ENCODE measurements at regions of chr17 and their contacts with region 1.

Region 1: GRCh38 chr17:19992803-19993713 is 15.4 kb upstream of the AKAP10 start:
- DNase-seq: no peak
- H3K4me3 ChIP-seq: no peak overlapping the region
- H3K27ac ChIP-seq: no peak overlapping the region
- H3K4me1 ChIP-seq: peaks cover 13% of the 10 kb centered on the region
- H3K27me3 ChIP-seq: no peaks in the 10 kb centered on the region
- CTCF ChIP-seq: peak; percentile 52 to 86 (median 74)
- POLR2A ChIP-seq: no peak

Region 2: DNA sequence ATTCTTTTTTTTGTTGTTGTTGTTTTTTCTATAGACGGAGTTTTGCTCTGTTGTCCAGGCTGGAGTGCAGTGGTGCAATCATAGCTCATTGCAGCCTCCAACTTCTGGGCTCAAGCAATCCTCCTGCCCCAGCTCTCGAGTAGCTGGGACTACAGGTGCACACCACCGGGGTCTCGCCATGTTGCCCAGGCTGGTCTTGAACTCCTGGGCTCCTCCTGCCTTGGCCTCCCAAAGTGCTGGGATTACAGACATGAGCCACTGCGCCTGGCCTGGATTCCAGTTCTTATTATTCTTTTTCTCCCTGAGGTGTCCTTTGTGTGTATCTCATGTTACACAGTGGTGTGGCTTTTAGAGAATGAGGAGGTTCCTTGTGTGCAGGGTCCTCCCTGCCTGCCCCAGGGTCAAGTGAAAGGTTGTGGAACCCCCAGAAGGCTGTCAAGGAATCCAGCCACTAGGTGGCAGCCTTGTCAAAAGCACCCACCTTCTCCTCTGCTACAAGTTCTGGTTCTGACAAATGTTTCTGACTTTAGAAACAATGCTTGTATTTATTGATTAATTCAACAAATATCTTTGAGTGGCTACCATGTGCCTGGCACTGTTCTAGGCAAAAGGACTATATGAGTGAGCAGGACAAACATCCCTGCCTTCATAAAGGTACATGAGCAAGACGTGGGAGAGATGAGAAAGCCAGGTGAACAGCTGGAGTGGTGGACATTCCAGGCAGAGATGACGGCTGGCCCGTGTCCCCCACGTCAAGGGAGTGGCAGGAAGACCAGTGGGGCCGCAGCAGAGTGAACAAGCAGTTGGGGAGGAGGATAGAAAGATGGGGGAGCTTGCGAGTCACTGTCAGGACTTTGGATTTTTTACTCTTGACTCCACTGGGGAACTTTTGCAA is 128.5 kb after region 1 on chr17:
- intact Hi-C with region 1: loop called (anchors 5 kb)
- DNase-seq: no peak
- H3K4me3 ChIP-seq: no peak overlapping the region
- H3K27ac ChIP-seq: no peak overlapping the region
- H3K4me1 ChIP-seq: no peaks in the 10 kb centered on the region
- H3K27me3 ChIP-seq: no peaks in the 10 kb centered on the region
- CTCF ChIP-seq: peak; percentile 41 to 76 (median 61)
- POLR2A ChIP-seq: no peak

Region 3: DNA sequence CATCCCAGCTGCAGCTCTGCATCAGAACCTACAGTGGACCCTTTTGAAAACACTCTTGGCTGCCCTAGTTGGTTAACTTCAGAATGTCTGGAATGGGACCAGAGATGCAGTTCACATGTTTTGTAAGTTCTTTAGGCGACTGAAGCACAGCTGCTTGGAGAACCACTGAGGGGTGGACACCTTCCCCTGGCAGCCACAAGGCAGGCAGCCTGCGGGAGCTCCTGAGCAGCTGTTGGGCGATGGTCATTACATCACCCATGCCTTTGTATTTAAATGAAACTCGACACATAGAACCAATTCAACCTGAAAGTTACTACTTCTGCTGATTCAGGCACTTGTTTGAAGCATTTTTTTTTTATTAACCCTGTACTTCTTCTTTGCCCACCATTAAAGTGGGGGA is 322.8 kb after region 1 on chr17:
- intact Hi-C with region 1: loop called (anchors 10 kb)
- DNase-seq: no peak
- H3K4me3 ChIP-seq: no peak overlapping the region
- H3K27ac ChIP-seq: no peak overlapping the region
- H3K4me1 ChIP-seq: peaks cover 7% of the 10 kb centered on the region
- H3K27me3 ChIP-seq: no peaks in the 10 kb centered on the region
- CTCF ChIP-seq: no peak
- POLR2A ChIP-seq: no peak